Breast epithelium (tissue), 4 donors: ENCODE measurements at regions of chr3 and their contacts with region 1.

Region 1: GRCh38 chr3:194109192-194109863 is 26.6 kb upstream of the HES1 start:
- DNase-seq: no peak
- H3K4me3 ChIP-seq: no peak overlapping the region
- H3K27ac ChIP-seq: no peak overlapping the region
- H3K4me1 ChIP-seq: no peaks in the 10 kb centered on the region
- H3K27me3 ChIP-seq: no peaks in the 10 kb centered on the region
- CTCF ChIP-seq: no peak
- POLR2A ChIP-seq: no peak

Region 2: GRCh38 chr3:193023218-193023617 is 1086.1 kb before region 1 on chr3:
- intact Hi-C with region 1: no loop called
- DNase-seq: no peak
- H3K4me3 ChIP-seq: no peak overlapping the region
- H3K27ac ChIP-seq: no peak overlapping the region
- H3K4me1 ChIP-seq: no peaks in the 10 kb centered on the region
- H3K27me3 ChIP-seq: no peaks in the 10 kb centered on the region
- CTCF ChIP-seq: no peak
- POLR2A ChIP-seq: no peak

Region 3: GRCh38 chr3:194061421-194062030 is 47.8 kb before region 1 on chr3:
- intact Hi-C with region 1: loop called (anchors 2 kb)
- DNase-seq: no peak
- H3K4me3 ChIP-seq: no peak overlapping the region
- H3K27ac ChIP-seq: no peak overlapping the region
- H3K4me1 ChIP-seq: no peaks in the 10 kb centered on the region
- H3K27me3 ChIP-seq: no peaks in the 10 kb centered on the region
- CTCF ChIP-seq: no peak
- POLR2A ChIP-seq: no peak

Region 4: DNA sequence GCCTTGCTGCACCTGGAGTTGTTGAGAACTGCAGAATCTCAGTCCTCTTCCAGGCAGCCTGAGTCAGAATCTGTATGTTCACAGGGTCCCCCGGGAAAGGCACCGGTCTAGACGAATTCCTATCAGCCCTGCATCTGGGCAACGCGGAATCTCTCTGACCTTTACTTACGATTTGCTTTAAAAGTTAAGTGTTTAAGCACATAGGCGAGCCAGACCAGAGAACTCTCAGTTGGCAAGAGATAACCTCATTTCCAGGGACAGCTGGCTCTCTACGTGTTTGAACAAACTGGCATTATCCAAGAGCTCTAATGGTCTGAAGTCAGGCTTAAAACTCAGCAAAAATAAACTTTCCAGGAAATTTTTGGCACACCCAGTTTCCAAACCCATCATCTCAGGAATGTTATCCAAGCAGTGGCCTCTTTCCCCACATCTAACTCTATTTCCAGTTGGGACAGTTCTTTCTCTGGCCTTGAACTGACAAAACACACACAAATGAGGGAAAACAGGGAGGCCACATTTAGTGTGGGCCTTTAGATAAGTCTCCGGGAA is 80.0 kb after region 1 on chr3:
- intact Hi-C with region 1: loop called (anchors 2 kb)
- DNase-seq: no peak
- H3K4me3 ChIP-seq: no peak overlapping the region
- H3K27ac ChIP-seq: no peak overlapping the region
- H3K4me1 ChIP-seq: no peaks in the 10 kb centered on the region
- H3K27me3 ChIP-seq: no peaks in the 10 kb centered on the region
- CTCF ChIP-seq: no peak
- POLR2A ChIP-seq: no peak